ENCODE measurements at regions of chr16 and their contacts with region 1.

Region 1: DNA sequence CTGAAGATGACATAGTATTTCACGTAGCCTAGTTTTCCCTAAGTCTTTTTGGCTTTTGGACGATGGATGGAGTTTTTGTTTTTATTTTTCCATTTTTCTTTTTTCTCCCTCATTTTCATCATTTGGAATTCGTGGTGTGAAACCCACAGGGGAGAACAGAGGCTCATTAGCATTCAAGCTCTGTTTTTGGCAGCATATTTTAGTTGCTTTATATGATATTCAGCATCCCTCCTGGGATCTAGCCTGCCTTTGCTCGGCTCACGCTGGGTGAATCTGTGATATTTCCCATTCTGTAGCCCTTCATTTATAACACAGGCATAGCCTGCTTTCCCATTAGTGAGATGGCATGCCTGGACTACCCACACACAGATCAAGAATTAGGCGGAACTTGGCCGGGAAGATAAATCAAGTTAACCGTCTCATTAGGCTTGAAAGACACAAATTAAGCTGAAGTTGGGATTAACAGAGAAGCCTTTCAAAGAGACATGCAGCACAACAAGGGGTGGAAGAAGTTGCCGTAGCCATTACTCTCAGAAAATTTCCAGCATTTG is 20.1 kb upstream of the CLEC19A start:
- DNase-seq: no peak
- ATAC-seq: no peak
- H3K4me3 ChIP-seq: no peak overlapping the region
- H3K27ac ChIP-seq: no peak overlapping the region
- H3K4me1 ChIP-seq: no peaks in the 10 kb centered on the region
- H3K27me3 ChIP-seq: peaks cover 0 to 2% of the 10 kb centered on the region in 2 donors

Region 2: GRCh38 chr16:19142939-19143598 is 122.4 kb before region 1 on chr16:
- intact Hi-C with region 1: loop called in 1 of 2 experiments (anchors 10 kb)
- DNase-seq: no peak
- ATAC-seq: no peak
- H3K4me3 ChIP-seq: no peak overlapping the region
- H3K27ac ChIP-seq: no peak overlapping the region
- H3K4me1 ChIP-seq: no peaks in the 10 kb centered on the region
- H3K27me3 ChIP-seq: peaks cover 0 to 1% of the 10 kb centered on the region in 2 donors

Region 3: DNA sequence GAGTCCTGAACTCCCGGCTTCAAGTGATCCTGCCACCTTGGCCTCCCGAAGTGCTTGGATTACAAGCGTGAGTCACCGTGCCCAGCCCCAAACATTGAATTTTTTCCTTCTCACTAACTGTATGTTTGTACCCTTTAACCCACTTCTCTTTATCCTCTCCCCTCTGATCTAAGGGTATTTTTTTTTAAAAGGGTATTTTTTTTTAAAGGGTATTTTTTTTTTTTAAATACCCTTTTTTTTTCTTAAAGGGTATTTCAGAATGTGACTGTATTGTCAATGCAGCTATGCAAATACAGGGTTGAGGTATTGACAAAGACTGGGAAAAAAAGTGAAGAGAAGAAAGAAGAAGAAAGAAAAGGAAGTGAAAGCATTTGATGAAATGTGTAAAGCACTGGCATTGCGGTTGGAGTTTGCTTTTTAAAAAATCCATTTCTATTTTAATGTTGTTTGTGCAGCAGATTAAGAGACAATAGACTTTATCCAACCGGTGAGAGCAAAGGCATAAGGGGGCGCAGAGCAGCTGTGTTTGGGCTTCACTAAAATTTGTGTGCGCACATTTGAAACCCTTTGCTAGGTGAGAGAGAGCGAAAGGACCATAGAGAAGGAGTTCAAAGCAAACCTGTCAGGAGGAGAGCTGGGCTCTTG is 55.1 kb before region 1 on chr16:
- intact Hi-C with region 1: no loop called
- DNase-seq: no peak
- ATAC-seq: no peak
- H3K4me3 ChIP-seq: no peak overlapping the region
- H3K27ac ChIP-seq: no peak overlapping the region
- H3K4me1 ChIP-seq: no peaks in the 10 kb centered on the region
- H3K27me3 ChIP-seq: no peaks in the 10 kb centered on the region

Region 4: GRCh38 chr16:19281246-19281645 is 15.8 kb after region 1 on chr16:
- intact Hi-C with region 1: no loop called
- DNase-seq: no peak
- ATAC-seq: no peak
- H3K4me3 ChIP-seq: no peak overlapping the region
- H3K27ac ChIP-seq: no peak overlapping the region
- H3K4me1 ChIP-seq: no peaks in the 10 kb centered on the region
- H3K27me3 ChIP-seq: no peaks in the 10 kb centered on the region

Measured in aorta (tissue), 5 donors.